H1 (cell line): ENCODE measurements at regions of chr11 and their contacts with region 1.

Region 1: GRCh38 chr11:62556108-62556871 is 9.7 kb upstream of the AHNAK start:
- DNase-seq: peak; percentile 63 to 77
- H3K4me3 ChIP-seq: no peak overlapping the region
- H3K27ac ChIP-seq: peak overlapping the region; percentile 67
- H3K4me1 ChIP-seq: peaks cover 32 to 68% (median 39%) of the 10 kb centered on the region in 4 experiments
- H3K27me3 ChIP-seq: no peaks in the 10 kb centered on the region
- CTCF ChIP-seq: no peak
- EP300 ChIP-seq: no peak
- POLR2A ChIP-seq: peak; percentile 20 to 36; a peak in 2 of 3 replicates
- RAD21 ChIP-seq: no peak

Region 2: DNA sequence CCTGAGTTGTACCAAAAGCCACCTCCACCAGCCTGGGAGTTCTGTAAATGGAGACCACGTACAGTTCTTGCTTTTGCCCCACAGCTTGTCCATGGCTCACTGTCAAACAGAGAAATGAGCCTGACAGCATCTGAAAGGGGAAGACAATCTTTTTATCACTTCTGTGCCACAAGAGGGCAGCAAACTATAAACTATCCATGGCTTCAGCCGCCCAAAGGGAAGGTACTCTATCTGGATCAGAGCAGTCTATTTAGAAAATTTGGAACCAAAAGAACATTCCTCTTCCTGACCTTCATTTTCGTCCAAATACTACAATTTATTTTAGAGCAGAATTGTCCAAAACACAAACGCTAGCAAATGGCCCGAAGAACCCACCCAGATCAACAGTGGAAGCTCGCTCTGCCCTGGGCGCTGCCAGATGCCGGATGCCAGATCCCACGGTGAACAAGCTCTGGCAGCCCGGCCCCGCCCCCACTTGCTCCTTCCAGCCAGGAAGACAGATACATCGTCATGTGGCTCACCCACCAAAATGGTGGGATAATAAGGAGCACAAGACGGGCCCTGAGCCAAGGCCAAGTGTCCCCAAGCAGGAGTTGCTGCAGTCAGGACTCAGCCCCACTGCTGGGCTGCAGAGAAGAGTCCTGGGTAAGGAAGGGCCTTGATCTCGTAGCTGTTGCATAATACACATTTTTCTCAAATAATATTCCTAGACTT is 161.3 kb before region 1 on chr11:
- CTCF ChIA-PET with region 1: interaction called, 86 read pairs
- POLR2A ChIA-PET with region 1: interaction called, 10 read pairs
- DNase-seq: peak in 1 of 2 experiments; percentile 82
- H3K4me3 ChIP-seq: peak overlapping the region; percentile 9 to 54 (median 22); a peak in 5 of 8 replicates
- H3K27ac ChIP-seq: no peak overlapping the region
- H3K4me1 ChIP-seq: peaks cover 3 to 13% (median 4%) of the 10 kb centered on the region in 4 experiments; a peak in 5 of 7 replicates
- H3K27me3 ChIP-seq: no peaks in the 10 kb centered on the region
- CTCF ChIP-seq: peak in 2 of 3 experiments; percentile 64 to 71; a peak in 3 of 4 replicates
- EP300 ChIP-seq: no peak
- POLR2A ChIP-seq: no peak
- RAD21 ChIP-seq: peak; percentile 86 to 88

Region 3: GRCh38 chr11:62427630-62428233 is 128.6 kb before region 1 on chr11:
- CTCF ChIA-PET with region 1: interaction called, 85 read pairs
- POLR2A ChIA-PET with region 1: interaction called, 19 read pairs
- DNase-seq: no peak
- H3K4me3 ChIP-seq: no peak overlapping the region
- H3K27ac ChIP-seq: no peak overlapping the region
- H3K4me1 ChIP-seq: 0 out of 7 replicates have a peak, but pooled peaks cover 0 to 2% (median 0%) of the 10 kb centered on the region in 4 experiments
- H3K27me3 ChIP-seq: peaks cover 0 to 15% (median 10%) of the 10 kb centered on the region in 4 experiments; a peak in 6 of 7 replicates
- CTCF ChIP-seq: no peak
- EP300 ChIP-seq: no peak
- POLR2A ChIP-seq: no peak
- RAD21 ChIP-seq: no peak

Region 4: GRCh38 chr11:62497132-62497915 is 59.0 kb before region 1 on chr11:
- CTCF ChIA-PET with region 1: interaction called, 56 read pairs
- POLR2A ChIA-PET with region 1: interaction called, 11 read pairs
- DNase-seq: no peak
- H3K4me3 ChIP-seq: no peak overlapping the region
- H3K27ac ChIP-seq: no peak overlapping the region
- H3K4me1 ChIP-seq: peaks cover 2 to 11% (median 7%) of the 10 kb centered on the region in 4 experiments; a peak in 6 of 7 replicates
- H3K27me3 ChIP-seq: peaks cover 0 to 4% (median 0%) of the 10 kb centered on the region in 4 experiments; a peak in 3 of 7 replicates
- CTCF ChIP-seq: peak; percentile 67 to 82 (median 70)
- EP300 ChIP-seq: no peak
- POLR2A ChIP-seq: no peak
- RAD21 ChIP-seq: peak; percentile 85 to 88

Region 5: GRCh38 chr11:62573592-62574362 is 17.5 kb after region 1 on chr11 and contains the start of gene EEF1G:
- CTCF ChIA-PET with region 1: interaction called, 22 read pairs
- POLR2A ChIA-PET with region 1: interaction called, 336 read pairs
- DNase-seq: peak; percentile 96 to 99
- H3K4me3 ChIP-seq: peak within 1 kb of the TSS; percentile 90 to 100 (median 91)
- H3K27ac ChIP-seq: peak within 1 kb of the TSS; percentile 75
- H3K4me1 ChIP-seq: peaks cover 0 to 11% (median 7%) of the 10 kb centered on the region in 4 experiments; a peak in 4 of 7 replicates
- H3K27me3 ChIP-seq: no peaks in the 10 kb centered on the region
- CTCF ChIP-seq: no peak
- EP300 ChIP-seq: peak in 1 of 2 experiments; percentile 48; a peak in 1 of 3 replicates
- POLR2A ChIP-seq: peak; percentile 64 to 86
- RAD21 ChIP-seq: no peak
- total RNA-seq, gene EEF1G: 1,622 and 1,627 TPM in 2 replicates